ENCODE measurements at regions of chr18 and their contacts with region 1.

Region 1: DNA sequence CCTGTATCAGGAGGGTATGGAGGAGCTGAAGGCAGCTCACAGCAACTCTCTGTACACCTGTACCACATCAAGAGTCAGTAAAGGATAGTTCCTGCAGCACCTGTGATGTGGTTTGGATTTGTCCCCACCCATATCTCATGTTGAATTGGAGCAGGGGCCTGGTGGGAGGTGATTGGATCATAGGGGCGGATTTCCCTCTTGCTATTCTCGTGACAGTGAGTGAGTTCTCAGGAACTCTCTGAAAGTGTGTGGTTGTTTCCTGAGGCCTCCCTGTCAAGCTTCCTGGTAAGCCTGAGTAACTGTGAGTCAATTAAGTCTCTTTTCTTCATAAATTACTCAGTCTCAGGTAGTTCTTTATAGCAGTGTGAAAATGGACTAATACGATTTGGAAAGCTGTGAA is 28.9 kb downstream of the OSBPL1A start:
- DNase-seq: peak; percentile 82
- H3K4me3 Mint-ChIP-seq: peak overlapping the region; percentile 6
- H3K27ac Mint-ChIP-seq: peak overlapping the region; percentile 60
- H3K4me1 Mint-ChIP-seq: peaks cover 24% of the 10 kb centered on the region
- H3K27me3 Mint-ChIP-seq: peaks cover 8% of the 10 kb centered on the region

Region 2: GRCh38 chr18:24014062-24014985 is 354.4 kb before region 1 on chr18 and contains the start of gene TTC39C:
- CTCF ChIA-PET with region 1: no interaction called
- POLR2A ChIA-PET with region 1: no interaction called
- intact Hi-C with region 1: loop called (anchors 5 kb)
- DNase-seq: peak; percentile 93
- H3K4me3 Mint-ChIP-seq: peak within 1 kb of the TSS; percentile 89
- H3K27ac Mint-ChIP-seq: peak within 1 kb of the TSS; percentile 89
- H3K4me1 Mint-ChIP-seq: peaks cover 71% of the 10 kb centered on the region
- H3K27me3 Mint-ChIP-seq: no peaks in the 10 kb centered on the region
- total RNA-seq, gene TTC39C: 48.9 to 49.0 TPM

Region 3: GRCh38 chr18:24397694-24398365 is 29.1 kb after region 1 on chr18 and contains the start of gene OSBPL1A:
- CTCF ChIA-PET with region 1: interaction called, 4 read pairs
- POLR2A ChIA-PET with region 1: interaction called, 8 read pairs
- intact Hi-C with region 1: loop called (anchors 1 kb)
- DNase-seq: peak; percentile 86
- H3K4me3 Mint-ChIP-seq: peak within 1 kb of the TSS; percentile 72
- H3K27ac Mint-ChIP-seq: no peak within 1 kb of the TSS
- H3K4me1 Mint-ChIP-seq: peaks cover 23% of the 10 kb centered on the region
- H3K27me3 Mint-ChIP-seq: peaks cover 28% of the 10 kb centered on the region
- total RNA-seq, gene OSBPL1A: 1.4 to 2.4 TPM

Region 4: DNA sequence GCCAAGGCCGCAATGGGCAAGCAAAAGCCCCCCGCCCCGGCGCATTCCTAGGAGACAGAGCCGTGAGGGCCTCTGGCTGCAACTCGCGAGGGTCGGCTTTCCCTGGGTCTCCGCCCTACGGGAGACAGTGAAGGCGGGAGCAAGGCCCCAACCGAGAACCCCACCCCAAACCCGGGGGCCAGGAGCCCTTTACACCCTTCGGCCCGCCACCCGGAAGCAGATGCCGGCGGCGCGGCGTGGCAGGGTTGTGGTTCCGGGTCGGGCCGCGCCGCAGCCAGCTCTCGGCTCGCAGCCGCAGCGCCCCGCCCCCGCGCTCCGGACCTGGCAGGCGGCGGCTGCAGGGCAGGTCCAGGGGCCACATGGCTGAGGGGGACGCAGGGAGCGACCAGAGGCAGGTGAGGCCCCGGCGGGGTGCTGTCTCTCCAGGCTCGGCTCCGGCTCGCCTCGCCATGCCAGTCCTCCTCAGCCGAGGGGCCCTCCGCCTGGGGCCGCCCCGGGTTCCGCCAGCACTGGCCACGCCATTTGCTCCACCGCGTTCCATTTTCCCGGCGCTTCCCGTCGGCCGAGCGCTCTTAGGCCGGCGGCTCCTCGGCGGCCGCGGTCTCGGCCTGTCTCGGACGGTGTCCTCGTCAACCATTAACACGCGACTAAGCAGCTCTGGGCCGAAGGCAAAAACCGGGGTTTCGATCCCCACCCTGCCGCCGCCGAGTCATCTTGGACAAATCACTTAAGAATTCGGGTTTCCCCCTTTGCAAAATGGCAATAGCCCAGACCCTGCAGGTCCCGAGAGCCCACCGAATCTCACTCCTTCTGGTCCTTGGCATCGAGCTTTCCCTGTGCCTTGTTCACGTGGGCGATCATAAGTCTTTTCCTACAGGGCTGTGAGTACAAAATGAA is 57.9 kb after region 1 on chr18 and contains the start of gene IMPACT:
- CTCF ChIA-PET with region 1: no interaction called
- POLR2A ChIA-PET with region 1: no interaction called
- intact Hi-C with region 1: loop called (anchors 5 kb)
- DNase-seq: peak; percentile 81
- H3K4me3 Mint-ChIP-seq: peak within 1 kb of the TSS; percentile 88
- H3K27ac Mint-ChIP-seq: peak within 1 kb of the TSS; percentile 90
- H3K4me1 Mint-ChIP-seq: peaks cover 18% of the 10 kb centered on the region
- H3K27me3 Mint-ChIP-seq: peaks cover 10% of the 10 kb centered on the region
- total RNA-seq, gene IMPACT: 13.7 to 15.9 TPM

Measured in activated CD4-positive, alpha-beta memory T cell treated with anti-CD3 and anti-CD28 coated beads for 36 hours (primary cell).